CD8-positive, alpha-beta T cell (primary cell): ENCODE measurements at regions of chr2 and their contacts with region 1.

Region 1: DNA sequence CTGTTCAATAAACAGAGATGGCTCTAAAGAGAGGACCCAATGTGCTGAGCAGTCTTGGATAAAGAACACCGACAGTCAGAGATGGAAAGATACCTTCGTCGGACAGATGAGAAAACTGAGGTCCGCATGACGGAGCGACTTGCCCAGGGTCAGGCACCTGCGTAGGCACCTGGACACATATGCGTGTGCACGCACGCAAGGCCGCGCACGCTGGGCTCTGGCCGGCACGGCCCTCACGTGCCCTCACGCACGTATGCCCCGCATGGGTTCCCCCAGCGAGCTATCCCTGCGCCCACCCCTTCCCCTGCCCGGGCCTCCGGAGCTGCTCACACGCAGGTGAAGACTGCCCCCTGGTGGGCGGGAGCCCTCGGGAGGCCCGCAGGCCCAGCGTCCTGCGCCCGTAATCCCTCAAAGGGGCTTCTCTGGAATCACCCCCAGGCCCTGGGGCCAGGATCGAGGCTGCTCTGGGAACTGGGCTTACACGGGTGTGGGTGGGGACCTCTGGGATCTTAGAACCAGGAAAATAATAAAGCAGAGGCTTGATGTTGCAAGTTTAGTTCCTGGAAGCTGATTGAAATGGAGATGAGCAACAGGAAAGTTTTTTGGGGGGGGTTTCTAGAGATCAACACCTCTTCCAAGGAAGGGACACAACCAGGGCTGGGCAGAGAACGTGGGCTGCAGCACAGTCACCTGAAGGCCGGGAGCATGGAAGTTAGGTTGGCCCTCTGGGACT is 246.3 kb downstream of the TNS1 start:
- DNase-seq: peak; percentile 40 to 85 (median 73)
- ATAC-seq: peak; percentile 89
- H3K4me3 ChIP-seq: peak overlapping the region; percentile 27 to 47
- H3K4me3 Mint-ChIP-seq: peak overlapping the region; percentile 77
- H3K27ac ChIP-seq: no peak overlapping the region
- H3K27ac Mint-ChIP-seq: no peak overlapping the region
- H3K4me1 ChIP-seq: peaks cover 25% of the 10 kb centered on the region
- H3K4me1 Mint-ChIP-seq: peaks cover 25% of the 10 kb centered on the region
- H3K27me3 ChIP-seq: no peaks in the 10 kb centered on the region
- H3K27me3 Mint-ChIP-seq: peaks cover 4% of the 10 kb centered on the region
- CTCF ChIP-seq: peak; percentile 85

Region 2: GRCh38 chr2:216519154-216519762 is 1237.3 kb before region 1 on chr2:
- CTCF ChIA-PET with region 1: no interaction called
- POLR2A ChIA-PET with region 1: no interaction called
- intact Hi-C with region 1: loop called in 1 of 2 experiments (anchors 5 kb)
- DNase-seq: peak in 8 of 9 experiments; percentile 20 to 77 (median 48)
- ATAC-seq: peak; percentile 51
- H3K4me3 ChIP-seq: no peak overlapping the region
- H3K4me3 Mint-ChIP-seq: no peak overlapping the region
- H3K27ac ChIP-seq: no peak overlapping the region
- H3K27ac Mint-ChIP-seq: no peak overlapping the region
- H3K4me1 ChIP-seq: no peaks in the 10 kb centered on the region
- H3K4me1 Mint-ChIP-seq: no peaks in the 10 kb centered on the region
- H3K27me3 ChIP-seq: no peaks in the 10 kb centered on the region
- H3K27me3 Mint-ChIP-seq: no peaks in the 10 kb centered on the region
- CTCF ChIP-seq: peak; percentile 72

Region 3: GRCh38 chr2:216681683-216682082 is 1074.9 kb before region 1 on chr2:
- CTCF ChIA-PET with region 1: interaction called, 10 read pairs
- POLR2A ChIA-PET with region 1: no interaction called
- intact Hi-C with region 1: loop called (anchors 1 kb)
- DNase-seq: no peak
- ATAC-seq: no peak
- H3K4me3 ChIP-seq: no peak overlapping the region
- H3K4me3 Mint-ChIP-seq: no peak overlapping the region
- H3K27ac ChIP-seq: no peak overlapping the region
- H3K27ac Mint-ChIP-seq: no peak overlapping the region
- H3K4me1 ChIP-seq: no peaks in the 10 kb centered on the region
- H3K4me1 Mint-ChIP-seq: peaks cover 3% of the 10 kb centered on the region
- H3K27me3 ChIP-seq: peaks cover 0 to 8% of the 10 kb centered on the region in 2 experiments
- H3K27me3 Mint-ChIP-seq: peaks cover 26% of the 10 kb centered on the region
- CTCF ChIP-seq: no peak

Region 4: DNA sequence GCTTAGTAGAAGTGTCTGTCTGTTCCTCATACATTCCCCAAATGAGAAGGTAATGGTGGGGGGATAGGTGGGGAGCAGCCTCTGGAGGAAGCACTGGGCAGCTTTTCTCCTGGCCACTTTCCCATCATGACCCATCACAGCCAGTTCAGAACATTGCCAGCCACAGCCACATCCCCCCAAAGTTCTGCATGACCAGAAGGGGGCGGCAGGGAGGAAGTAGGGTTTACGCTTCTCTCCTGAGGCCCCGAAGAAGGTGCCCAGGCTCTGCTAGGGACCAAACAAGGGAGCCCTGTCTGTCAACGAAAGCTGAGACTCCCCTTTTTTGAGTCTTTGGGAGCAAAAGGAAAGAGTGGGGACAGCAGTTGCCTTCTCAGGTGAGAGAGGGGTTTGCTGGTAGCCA is 1068.9 kb before region 1 on chr2:
- CTCF ChIA-PET with region 1: interaction called, 10 read pairs
- POLR2A ChIA-PET with region 1: no interaction called
- intact Hi-C with region 1: loop called (anchors 1 kb)
- DNase-seq: peak in 5 of 9 experiments; percentile 18 to 48 (median 32)
- ATAC-seq: no peak
- H3K4me3 ChIP-seq: no peak overlapping the region
- H3K4me3 Mint-ChIP-seq: no peak overlapping the region
- H3K27ac ChIP-seq: no peak overlapping the region
- H3K27ac Mint-ChIP-seq: no peak overlapping the region
- H3K4me1 ChIP-seq: peaks cover 14% of the 10 kb centered on the region
- H3K4me1 Mint-ChIP-seq: peaks cover 15% of the 10 kb centered on the region
- H3K27me3 ChIP-seq: peaks cover 4 to 10% of the 10 kb centered on the region in 2 experiments
- H3K27me3 Mint-ChIP-seq: peaks cover 57% of the 10 kb centered on the region
- CTCF ChIP-seq: peak; percentile 30

Region 5: GRCh38 chr2:216698895-216699294 is 1057.6 kb before region 1 on chr2:
- CTCF ChIA-PET with region 1: interaction called, 5 read pairs
- POLR2A ChIA-PET with region 1: no interaction called
- intact Hi-C with region 1: loop called in 1 of 2 experiments (anchors 2 kb)
- DNase-seq: peak in 2 of 9 experiments; percentile 33 to 55
- ATAC-seq: peak; percentile 53
- H3K4me3 ChIP-seq: no peak overlapping the region
- H3K4me3 Mint-ChIP-seq: no peak overlapping the region
- H3K27ac ChIP-seq: no peak overlapping the region
- H3K27ac Mint-ChIP-seq: no peak overlapping the region
- H3K4me1 ChIP-seq: peaks cover 14% of the 10 kb centered on the region
- H3K4me1 Mint-ChIP-seq: peaks cover 9% of the 10 kb centered on the region
- H3K27me3 ChIP-seq: peaks cover 6 to 17% of the 10 kb centered on the region in 2 experiments
- H3K27me3 Mint-ChIP-seq: peaks cover 32% of the 10 kb centered on the region
- CTCF ChIP-seq: peak; percentile 22

Region 6: GRCh38 chr2:217301142-217301925 is 455.2 kb before region 1 on chr2:
- CTCF ChIA-PET with region 1: no interaction called
- POLR2A ChIA-PET with region 1: no interaction called
- intact Hi-C with region 1: no loop called
- DNase-seq: no peak
- ATAC-seq: no peak
- H3K4me3 ChIP-seq: no peak overlapping the region
- H3K4me3 Mint-ChIP-seq: no peak overlapping the region
- H3K27ac ChIP-seq: no peak overlapping the region
- H3K27ac Mint-ChIP-seq: no peak overlapping the region
- H3K4me1 ChIP-seq: no peaks in the 10 kb centered on the region
- H3K4me1 Mint-ChIP-seq: no peaks in the 10 kb centered on the region
- H3K27me3 ChIP-seq: no peaks in the 10 kb centered on the region
- H3K27me3 Mint-ChIP-seq: peaks cover 2% of the 10 kb centered on the region
- CTCF ChIP-seq: no peak

Region 7: DNA sequence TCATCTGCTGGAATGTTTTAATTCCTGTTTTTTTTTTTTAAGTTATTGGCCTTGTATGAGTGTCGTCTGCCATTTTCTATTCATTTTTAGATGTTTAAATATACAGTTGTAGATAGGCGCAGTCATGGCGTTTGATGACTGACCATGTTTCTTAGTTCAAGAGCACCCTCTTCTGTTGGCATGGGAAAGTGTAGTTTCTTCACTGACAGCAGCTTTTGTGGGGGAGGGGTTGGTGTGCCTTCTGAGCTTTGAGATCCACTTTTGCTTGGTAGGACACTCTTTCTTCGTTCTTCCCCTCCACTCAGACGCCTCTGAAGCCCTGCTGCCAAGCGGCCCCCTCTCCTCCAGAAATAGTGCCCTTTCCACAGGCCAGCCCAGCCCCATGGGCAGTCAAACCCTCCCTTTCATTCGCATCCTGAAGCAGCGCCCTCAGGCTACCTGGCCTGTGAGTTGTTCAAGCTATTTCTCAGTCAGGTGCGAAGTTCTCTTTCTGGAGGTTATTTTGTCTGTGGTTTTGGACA is 245.7 kb before region 1 on chr2:
- CTCF ChIA-PET with region 1: no interaction called
- POLR2A ChIA-PET with region 1: no interaction called
- intact Hi-C with region 1: loop called in 1 of 2 experiments (anchors 2 kb)
- DNase-seq: peak in 4 of 9 experiments; percentile 19 to 69 (median 43)
- ATAC-seq: peak; percentile 58
- H3K4me3 ChIP-seq: no peak overlapping the region
- H3K4me3 Mint-ChIP-seq: no peak overlapping the region
- H3K27ac ChIP-seq: no peak overlapping the region
- H3K27ac Mint-ChIP-seq: no peak overlapping the region
- H3K4me1 ChIP-seq: no peaks in the 10 kb centered on the region
- H3K4me1 Mint-ChIP-seq: peaks cover 2% of the 10 kb centered on the region
- H3K27me3 ChIP-seq: no peaks in the 10 kb centered on the region
- H3K27me3 Mint-ChIP-seq: peaks cover 3% of the 10 kb centered on the region
- CTCF ChIP-seq: peak; percentile 26